Naive thymus-derived CD4-positive, alpha-beta T cell (primary cell): ENCODE measurements at regions of chr12 and their contacts with region 1.

Region 1: DNA sequence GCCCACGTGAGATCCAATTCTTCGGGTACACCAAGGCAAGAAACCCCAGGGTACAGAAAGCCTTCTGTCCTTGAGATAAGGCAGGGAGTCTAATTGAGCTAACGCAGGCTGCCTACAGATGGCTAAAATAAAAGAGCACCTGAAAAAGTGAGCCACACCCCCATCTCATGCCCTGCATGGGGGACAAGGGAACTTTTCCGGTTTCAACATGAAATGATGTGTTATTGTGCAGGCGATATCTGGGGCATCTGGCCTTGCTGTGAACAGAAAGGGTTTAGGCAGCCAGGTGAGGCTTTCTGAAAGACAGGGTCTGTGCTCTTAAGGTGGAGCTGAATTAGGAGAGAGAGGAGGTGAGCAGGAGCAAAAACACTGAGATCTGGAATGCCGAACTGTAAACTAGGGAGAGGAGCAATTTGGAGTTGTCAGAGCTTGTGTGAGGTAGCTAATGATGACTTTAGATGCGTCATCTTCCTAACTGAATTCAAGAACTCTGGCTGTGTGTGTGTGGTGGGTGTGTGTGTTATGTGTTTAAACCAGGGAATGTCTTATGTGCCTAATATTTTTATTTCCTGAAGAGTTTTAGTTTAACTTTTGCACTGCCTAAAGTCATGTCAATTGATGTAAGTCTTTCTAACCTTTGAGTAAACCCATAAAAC is 20.1 kb upstream of the LDHB start:
- DNase-seq: peak in 7 of 9 donors; percentile 29 to 49 (median 42)
- ATAC-seq: peak; percentile 51
- H3K4me3 ChIP-seq: peak overlapping the region; percentile 47
- H3K4me3 Mint-ChIP-seq: peak overlapping the region; percentile 36 to 91 (median 86)
- H3K27ac ChIP-seq: peak overlapping the region; percentile 60
- H3K27ac Mint-ChIP-seq: peak overlapping the region in 8 of 9 donors; percentile 72 to 94 (median 88)
- H3K4me1 ChIP-seq: peaks cover 6 to 54% of the 10 kb centered on the region in 2 donors
- H3K4me1 Mint-ChIP-seq: peaks cover 26 to 68% (median 58%) of the 10 kb centered on the region in 7 donors
- H3K27me3 ChIP-seq: no peaks in the 10 kb centered on the region
- H3K27me3 Mint-ChIP-seq: peaks cover 0 to 3% (median 0%) of the 10 kb centered on the region in 5 donors

Region 2: DNA sequence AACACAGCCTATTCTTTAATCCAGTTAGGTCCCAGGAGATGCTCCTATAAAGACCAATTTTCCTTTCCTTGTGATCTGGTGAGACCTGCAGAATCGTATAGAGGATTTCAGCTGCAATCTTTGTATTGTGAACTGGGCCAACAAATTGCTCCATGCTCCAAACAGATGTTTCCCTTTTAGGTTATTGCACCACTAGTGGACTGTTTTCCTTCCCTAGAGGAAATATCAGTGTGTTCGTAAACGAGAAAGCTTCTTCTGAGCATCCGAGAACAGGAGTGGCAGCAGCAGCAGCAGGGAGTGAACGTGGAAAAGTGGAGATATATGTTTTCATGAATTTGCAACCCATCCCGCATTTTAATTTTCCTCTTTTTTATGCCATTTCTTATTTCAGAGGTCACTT is 1653.6 kb before region 1 on chr12:
- CTCF ChIA-PET with region 1: no interaction called
- POLR2A ChIA-PET with region 1: no interaction called
- intact Hi-C with region 1: no loop called
- DNase-seq: no peak
- ATAC-seq: no peak
- H3K4me3 ChIP-seq: no peak overlapping the region
- H3K4me3 Mint-ChIP-seq: no peak overlapping the region
- H3K27ac ChIP-seq: no peak overlapping the region
- H3K27ac Mint-ChIP-seq: no peak overlapping the region
- H3K4me1 ChIP-seq: no peaks in the 10 kb centered on the region
- H3K4me1 Mint-ChIP-seq: peaks cover 0 to 4% (median 0%) of the 10 kb centered on the region in 7 donors
- H3K27me3 ChIP-seq: no peaks in the 10 kb centered on the region
- H3K27me3 Mint-ChIP-seq: peaks cover 0 to 3% (median 0%) of the 10 kb centered on the region in 5 donors

Region 3: GRCh38 chr12:21169878-21170472 is 507.8 kb before region 1 on chr12:
- CTCF ChIA-PET with region 1: no interaction called
- POLR2A ChIA-PET with region 1: no interaction called
- intact Hi-C with region 1: no loop called
- DNase-seq: peak in 2 of 9 donors; percentile 1 to 27
- ATAC-seq: no peak
- H3K4me3 ChIP-seq: no peak overlapping the region
- H3K4me3 Mint-ChIP-seq: no peak overlapping the region
- H3K27ac ChIP-seq: no peak overlapping the region
- H3K27ac Mint-ChIP-seq: no peak overlapping the region
- H3K4me1 ChIP-seq: no peaks in the 10 kb centered on the region
- H3K4me1 Mint-ChIP-seq: no peaks in the 10 kb centered on the region
- H3K27me3 ChIP-seq: no peaks in the 10 kb centered on the region
- H3K27me3 Mint-ChIP-seq: peaks cover 0 to 4% (median 0%) of the 10 kb centered on the region in 5 donors

Region 4: GRCh38 chr12:21296751-21297406 is 380.9 kb before region 1 on chr12:
- CTCF ChIA-PET with region 1: no interaction called
- POLR2A ChIA-PET with region 1: no interaction called
- intact Hi-C with region 1: loop called (anchors 1 to 2 kb)
- DNase-seq: peak in 4 of 9 donors; percentile 4 to 14 (median 8)
- ATAC-seq: peak; percentile 38
- H3K4me3 ChIP-seq: no peak overlapping the region
- H3K4me3 Mint-ChIP-seq: no peak overlapping the region
- H3K27ac ChIP-seq: no peak overlapping the region
- H3K27ac Mint-ChIP-seq: no peak overlapping the region
- H3K4me1 ChIP-seq: no peaks in the 10 kb centered on the region
- H3K4me1 Mint-ChIP-seq: peaks cover 0 to 4% (median 0%) of the 10 kb centered on the region in 7 donors
- H3K27me3 ChIP-seq: no peaks in the 10 kb centered on the region
- H3K27me3 Mint-ChIP-seq: peaks cover 4 to 13% (median 6%) of the 10 kb centered on the region in 5 donors

Region 5: DNA sequence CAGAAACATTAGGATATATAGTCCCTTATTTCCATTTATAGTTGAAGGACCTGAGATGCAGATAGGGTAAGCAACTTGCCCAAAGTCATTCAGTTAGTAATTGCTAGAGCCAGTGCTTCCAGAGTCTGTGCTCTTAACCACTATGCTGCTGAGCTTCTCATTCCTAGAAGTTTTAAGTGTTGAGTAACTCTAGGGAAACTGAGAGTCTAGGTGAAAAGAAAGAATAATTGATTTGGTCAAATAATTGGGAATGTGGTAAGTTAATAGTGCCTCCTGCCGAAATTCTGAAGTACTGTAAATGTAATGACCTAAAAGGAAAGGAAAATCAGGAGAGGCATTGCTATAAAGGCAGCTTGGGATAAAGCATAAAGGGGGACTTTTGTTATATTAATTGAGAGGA is 226.2 kb before region 1 on chr12:
- CTCF ChIA-PET with region 1: no interaction called
- POLR2A ChIA-PET with region 1: no interaction called
- intact Hi-C with region 1: loop called in 1 of 2 experiments (anchors 5 kb)
- DNase-seq: no peak
- ATAC-seq: no peak
- H3K4me3 ChIP-seq: no peak overlapping the region
- H3K4me3 Mint-ChIP-seq: no peak overlapping the region
- H3K27ac ChIP-seq: no peak overlapping the region
- H3K27ac Mint-ChIP-seq: peak overlapping the region in 4 of 9 donors; percentile 6 to 51 (median 28)
- H3K4me1 ChIP-seq: peaks cover 2 to 21% of the 10 kb centered on the region in 2 donors
- H3K4me1 Mint-ChIP-seq: peaks cover 2 to 48% (median 29%) of the 10 kb centered on the region in 7 donors
- H3K27me3 ChIP-seq: no peaks in the 10 kb centered on the region
- H3K27me3 Mint-ChIP-seq: no peaks in the 10 kb centered on the region

Region 6: GRCh38 chr12:21527451-21528180 is 150.1 kb before region 1 on chr12:
- CTCF ChIA-PET with region 1: no interaction called
- POLR2A ChIA-PET with region 1: no interaction called
- intact Hi-C with region 1: loop called in 1 of 2 experiments (anchors 2 kb)
- DNase-seq: peak; percentile 33 to 69 (median 61)
- ATAC-seq: peak; percentile 95
- H3K4me3 ChIP-seq: peak overlapping the region; percentile 63
- H3K4me3 Mint-ChIP-seq: peak overlapping the region; percentile 69 to 87 (median 80)
- H3K27ac ChIP-seq: no peak overlapping the region
- H3K27ac Mint-ChIP-seq: no peak overlapping the region
- H3K4me1 ChIP-seq: peaks cover 0 to 3% of the 10 kb centered on the region in 2 donors
- H3K4me1 Mint-ChIP-seq: peaks cover 0 to 13% (median 8%) of the 10 kb centered on the region in 7 donors
- H3K27me3 ChIP-seq: no peaks in the 10 kb centered on the region
- H3K27me3 Mint-ChIP-seq: peaks cover 18 to 54% (median 37%) of the 10 kb centered on the region in 5 donors

Region 7: GRCh38 chr12:21613931-21614330 is 63.8 kb before region 1 on chr12:
- CTCF ChIA-PET with region 1: interaction called, 68 read pairs
- POLR2A ChIA-PET with region 1: interaction called, 86 read pairs
- intact Hi-C with region 1: loop called in 1 of 2 experiments (anchors 1 kb)
- DNase-seq: no peak
- ATAC-seq: no peak
- H3K4me3 ChIP-seq: no peak overlapping the region
- H3K4me3 Mint-ChIP-seq: peak overlapping the region in 8 of 10 donors; percentile 36 to 82 (median 64)
- H3K27ac ChIP-seq: peak overlapping the region; percentile 61
- H3K27ac Mint-ChIP-seq: peak overlapping the region in 8 of 9 donors; percentile 84 to 98 (median 94)
- H3K4me1 ChIP-seq: peaks cover 25 to 46% of the 10 kb centered on the region in 2 donors
- H3K4me1 Mint-ChIP-seq: peaks cover 35 to 69% (median 60%) of the 10 kb centered on the region in 7 donors
- H3K27me3 ChIP-seq: no peaks in the 10 kb centered on the region
- H3K27me3 Mint-ChIP-seq: no peaks in the 10 kb centered on the region

Region 8: DNA sequence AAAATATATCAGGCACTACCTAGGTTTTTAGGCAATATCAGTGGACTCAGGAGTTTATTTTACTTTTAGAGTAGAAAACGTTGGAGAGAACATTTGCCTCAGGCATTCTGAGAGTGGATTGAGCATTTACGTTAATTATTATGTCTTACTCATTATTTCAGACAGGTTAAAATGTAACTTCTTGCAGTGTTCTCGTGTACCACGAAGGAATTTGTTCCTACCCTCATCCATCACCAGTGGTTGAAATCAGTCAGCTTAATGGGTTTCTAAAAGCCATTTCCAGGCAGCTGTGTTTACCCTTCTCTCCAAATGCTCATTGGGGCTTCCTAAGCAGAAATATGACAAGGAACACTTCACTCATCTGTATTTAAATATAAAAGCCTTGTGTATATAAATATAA is 11.0 kb before region 1 on chr12:
- CTCF ChIA-PET with region 1: interaction called, 5 read pairs
- POLR2A ChIA-PET with region 1: interaction called, 54 read pairs
- intact Hi-C with region 1: loop called in 1 of 2 experiments (anchors 1 kb)
- DNase-seq: no peak
- ATAC-seq: no peak
- H3K4me3 ChIP-seq: no peak overlapping the region
- H3K4me3 Mint-ChIP-seq: no peak overlapping the region
- H3K27ac ChIP-seq: no peak overlapping the region
- H3K27ac Mint-ChIP-seq: no peak overlapping the region
- H3K4me1 ChIP-seq: no peaks in the 10 kb centered on the region
- H3K4me1 Mint-ChIP-seq: peaks cover 0 to 21% (median 3%) of the 10 kb centered on the region in 7 donors
- H3K27me3 ChIP-seq: no peaks in the 10 kb centered on the region
- H3K27me3 Mint-ChIP-seq: peaks cover 0 to 25% (median 0%) of the 10 kb centered on the region in 5 donors

Region 9: DNA sequence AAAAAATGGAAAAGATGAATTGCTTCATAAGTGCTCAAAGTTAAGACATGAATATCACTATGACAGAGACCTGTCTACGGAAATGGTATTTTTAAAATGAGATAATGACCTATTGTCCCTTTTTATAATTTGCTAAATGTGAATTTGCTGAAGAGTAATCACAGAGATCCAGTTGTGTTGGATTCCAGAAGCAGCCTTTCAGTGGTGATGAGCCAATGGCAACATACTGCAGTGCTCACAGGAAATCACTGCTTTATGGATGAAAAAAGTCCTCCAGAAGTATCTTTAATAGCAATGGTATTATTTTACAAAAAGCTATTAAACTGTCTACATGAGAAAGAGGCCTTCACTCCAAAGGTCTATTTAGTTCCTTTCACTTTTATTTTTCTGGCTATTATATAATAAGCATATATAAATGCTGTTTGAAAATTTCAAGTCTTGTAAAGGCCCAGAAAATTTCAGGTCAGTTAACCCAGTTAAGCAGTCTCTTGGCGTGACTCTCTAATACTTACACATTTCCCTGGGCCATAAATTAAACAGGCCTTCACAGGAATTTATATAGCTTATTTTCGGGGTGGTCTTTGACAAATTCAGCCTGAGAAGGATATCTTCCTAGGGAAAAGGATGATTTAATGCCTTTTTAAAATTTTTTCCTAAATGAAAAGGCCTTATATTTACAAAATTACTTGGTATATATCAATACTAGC is 41.3 kb after region 1 on chr12:
- CTCF ChIA-PET with region 1: no interaction called
- POLR2A ChIA-PET with region 1: no interaction called
- intact Hi-C with region 1: no loop called
- DNase-seq: no peak
- ATAC-seq: no peak
- H3K4me3 ChIP-seq: no peak overlapping the region
- H3K4me3 Mint-ChIP-seq: no peak overlapping the region
- H3K27ac ChIP-seq: no peak overlapping the region
- H3K27ac Mint-ChIP-seq: no peak overlapping the region
- H3K4me1 ChIP-seq: no peaks in the 10 kb centered on the region
- H3K4me1 Mint-ChIP-seq: peaks cover 0 to 2% (median 0%) of the 10 kb centered on the region in 7 donors
- H3K27me3 ChIP-seq: no peaks in the 10 kb centered on the region
- H3K27me3 Mint-ChIP-seq: peaks cover 2 to 10% (median 7%) of the 10 kb centered on the region in 5 donors